Activated naive CD4-positive, alpha-beta T cell treated with anti-CD3 and anti-CD28 coated beads for 36 hours (primary cell): ENCODE measurements at regions of chr6 and their contacts with region 1.

Region 1: GRCh38 chr6:136655239-136656014 is 105.2 kb upstream of the MAP7 start:
- DNase-seq: no peak
- H3K4me3 Mint-ChIP-seq: no peak overlapping the region
- H3K27ac Mint-ChIP-seq: no peak overlapping the region
- H3K4me1 Mint-ChIP-seq: no peaks in the 10 kb centered on the region
- H3K27me3 Mint-ChIP-seq: no peaks in the 10 kb centered on the region

Region 2: GRCh38 chr6:136306466-136306865 is 349.0 kb before region 1 on chr6:
- CTCF ChIA-PET with region 1: no interaction called
- intact Hi-C with region 1: no loop called
- DNase-seq: no peak
- H3K4me3 Mint-ChIP-seq: no peak overlapping the region
- H3K27ac Mint-ChIP-seq: no peak overlapping the region
- H3K4me1 Mint-ChIP-seq: no peaks in the 10 kb centered on the region
- H3K27me3 Mint-ChIP-seq: no peaks in the 10 kb centered on the region

Region 3: DNA sequence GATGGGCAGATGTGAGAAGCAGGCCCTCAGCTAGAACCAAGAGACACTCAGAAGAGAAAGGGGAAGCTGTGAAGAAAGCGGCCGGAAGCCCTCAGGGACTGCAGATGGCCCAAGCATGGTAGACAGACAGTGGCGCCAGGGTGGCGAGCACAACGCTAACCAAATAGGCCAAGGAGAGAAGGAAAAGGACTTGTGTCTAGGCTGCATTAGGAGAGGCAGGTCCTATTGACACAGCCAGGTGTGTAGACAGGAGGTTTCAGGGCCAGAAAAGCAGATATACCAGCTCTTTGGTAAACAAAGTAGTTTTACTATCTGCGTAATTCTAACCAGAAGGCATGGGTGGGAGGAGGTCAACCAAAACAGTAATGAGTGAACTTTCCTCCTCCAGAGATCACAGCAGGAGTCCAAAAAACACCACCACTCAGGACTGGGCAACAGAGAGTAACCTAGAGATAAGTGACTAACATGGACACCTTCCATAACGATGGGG is 89.4 kb before region 1 on chr6:
- CTCF ChIA-PET with region 1: no interaction called
- intact Hi-C with region 1: no loop called
- DNase-seq: no peak
- H3K4me3 Mint-ChIP-seq: no peak overlapping the region
- H3K27ac Mint-ChIP-seq: no peak overlapping the region
- H3K4me1 Mint-ChIP-seq: no peaks in the 10 kb centered on the region
- H3K27me3 Mint-ChIP-seq: no peaks in the 10 kb centered on the region

Region 4: DNA sequence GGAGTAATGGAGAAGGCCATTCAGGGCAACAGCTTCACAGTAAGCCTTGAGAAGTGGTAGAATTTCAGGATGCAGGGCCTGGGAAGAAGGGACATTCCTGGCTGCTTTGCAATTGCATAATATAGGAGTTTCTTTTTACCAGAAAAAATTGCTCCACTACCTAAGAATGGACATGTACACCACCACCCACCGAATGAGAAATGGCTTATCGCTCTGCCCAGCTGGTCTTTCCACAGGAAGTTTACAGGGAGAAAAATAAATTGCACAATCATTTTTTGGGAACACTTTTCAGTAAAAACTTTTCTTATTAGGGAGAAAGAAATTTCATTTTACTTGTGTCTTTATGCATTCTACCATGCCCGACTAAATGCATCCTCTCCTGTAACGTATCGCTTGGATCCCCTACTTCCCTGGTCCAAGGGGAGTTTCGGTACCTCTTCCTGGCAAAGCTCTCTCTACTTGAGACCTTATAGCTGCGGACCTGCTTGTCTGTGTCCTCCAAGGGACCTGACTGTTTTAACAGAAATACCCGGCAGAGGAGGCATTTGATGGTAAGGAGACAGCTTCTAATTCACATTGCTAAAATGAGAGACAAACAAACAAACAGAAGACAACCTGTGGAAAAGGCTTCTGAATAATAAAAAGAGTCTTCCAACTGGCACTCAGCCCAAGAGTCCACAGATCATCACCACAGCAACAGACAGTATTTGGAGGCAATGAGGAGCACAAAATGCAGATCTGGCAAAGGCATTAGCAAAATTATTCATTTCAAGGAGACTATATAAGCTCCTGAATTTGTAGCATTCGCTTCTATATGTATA is 82.7 kb after region 1 on chr6:
- CTCF ChIA-PET with region 1: no interaction called
- intact Hi-C with region 1: loop called (anchors 5 kb)
- DNase-seq: no peak
- H3K4me3 Mint-ChIP-seq: no peak overlapping the region
- H3K27ac Mint-ChIP-seq: no peak overlapping the region
- H3K4me1 Mint-ChIP-seq: peaks cover 8% of the 10 kb centered on the region
- H3K27me3 Mint-ChIP-seq: no peaks in the 10 kb centered on the region